Dendritic cell treated with granulocyte-macrophage colony-stimulating factor and Interleukin-4, amounts not matched to agents 40 ng/mL and 50 ng/mL, for 4 days (primary cell): ENCODE measurements at regions of chr13 and their contacts with region 1.

Region 1: GRCh38 chr13:101144808-101145419 is 271.4 kb downstream of the NALCN start:
- H3K4me3 Mint-ChIP-seq: no peak overlapping the region
- H3K27ac Mint-ChIP-seq: no peak overlapping the region
- H3K4me1 Mint-ChIP-seq: no peaks in the 10 kb centered on the region
- H3K27me3 Mint-ChIP-seq: peaks cover 3% of the 10 kb centered on the region

Region 2: GRCh38 chr13:102452831-102453230 is 1307.9 kb after region 1 on chr13:
- intact Hi-C with region 1: loop called (anchors 10 kb)
- H3K4me3 Mint-ChIP-seq: no peak overlapping the region
- H3K27ac Mint-ChIP-seq: no peak overlapping the region
- H3K4me1 Mint-ChIP-seq: no peaks in the 10 kb centered on the region
- H3K27me3 Mint-ChIP-seq: no peaks in the 10 kb centered on the region